ENCODE measurements at regions of chr10 and their contacts with region 1.

Region 1: GRCh38 chr10:130341356-130341755 is 205.2 kb downstream of the GLRX3 start:
- DNase-seq: peak; percentile 74
- H3K4me3 ChIP-seq: no peak overlapping the region
- H3K27ac ChIP-seq: no peak overlapping the region
- H3K4me1 ChIP-seq: no peaks in the 10 kb centered on the region
- H3K27me3 ChIP-seq: no peaks in the 10 kb centered on the region
- CTCF ChIP-seq: no peak
- EP300 ChIP-seq: no peak
- RAD21 ChIP-seq: peak; percentile 74

Region 2: GRCh38 chr10:130352291-130352645 is 10.9 kb after region 1 on chr10:
- CTCF ChIA-PET with region 1: interaction called, 13 read pairs
- POLR2A ChIA-PET with region 1: no interaction called
- DNase-seq: no peak
- H3K4me3 ChIP-seq: no peak overlapping the region
- H3K27ac ChIP-seq: no peak overlapping the region
- H3K4me1 ChIP-seq: no peaks in the 10 kb centered on the region; a peak in 1 of 4 replicates
- H3K27me3 ChIP-seq: no peaks in the 10 kb centered on the region
- CTCF ChIP-seq: no peak
- EP300 ChIP-seq: no peak
- RAD21 ChIP-seq: no peak